Ascending aorta (tissue), 2 donors: ENCODE measurements at regions of chr3 and their contacts with region 1.

Region 1: DNA sequence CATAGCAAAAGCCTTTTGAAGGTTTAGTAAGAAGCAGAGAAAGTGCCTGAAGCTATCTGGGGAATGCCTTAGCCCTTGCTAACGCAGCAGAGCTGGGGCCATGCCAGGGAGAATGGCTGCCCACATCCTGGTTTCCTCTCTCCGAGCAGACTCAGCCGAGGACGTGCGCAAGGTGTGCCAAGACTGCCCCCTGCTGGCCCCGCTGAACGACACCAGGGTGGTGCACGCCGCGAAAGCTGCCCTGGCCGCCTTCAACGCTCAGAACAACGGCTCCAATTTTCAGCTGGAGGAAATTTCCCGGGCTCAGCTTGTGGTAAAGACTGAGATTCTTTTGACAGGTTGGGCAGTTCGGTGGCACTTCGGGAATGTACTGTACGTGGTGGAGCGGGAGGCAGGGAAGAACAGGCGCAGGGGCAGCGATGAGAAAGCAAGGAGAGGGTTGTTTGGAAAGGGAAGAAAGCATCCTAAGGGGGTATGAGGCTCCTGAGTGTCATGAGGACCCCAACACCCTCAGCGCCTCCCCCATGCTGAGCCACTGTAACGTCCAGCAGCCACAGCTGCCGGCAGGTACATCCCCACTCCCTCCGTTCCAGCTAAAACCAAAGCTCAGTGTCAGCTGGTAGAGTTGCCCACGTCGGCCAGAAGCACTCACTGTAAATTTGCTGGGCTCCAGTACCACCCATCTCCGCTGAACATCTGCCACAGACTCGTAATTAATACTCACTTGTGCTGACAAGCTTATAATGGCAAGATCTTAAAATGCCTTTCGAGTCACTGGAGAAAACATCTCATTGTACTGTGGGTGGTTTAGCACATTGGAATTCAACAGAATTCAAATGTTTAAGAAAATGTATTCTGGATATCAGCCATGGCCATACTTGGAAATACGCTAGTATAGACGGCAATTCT is 4.4 kb downstream of the AHSG start:
- DNase-seq: peak; percentile 66 to 93
- H3K4me3 ChIP-seq: peak overlapping the region in 1 of 2 donors; percentile 45
- H3K27ac ChIP-seq: no peak overlapping the region
- H3K4me1 ChIP-seq: peaks cover 2 to 4% of the 10 kb centered on the region in 2 donors
- H3K27me3 ChIP-seq: no peaks in the 10 kb centered on the region
- CTCF ChIP-seq: peak; percentile 86 to 93 (median 88)

Region 2: GRCh38 chr3:185976977-185977678 is 640.2 kb before region 1 on chr3:
- intact Hi-C with region 1: loop called (anchors 2 kb)
- DNase-seq: peak in 1 of 2 donors; percentile 88
- H3K4me3 ChIP-seq: no peak overlapping the region
- H3K27ac ChIP-seq: no peak overlapping the region
- H3K4me1 ChIP-seq: peaks cover 4 to 24% of the 10 kb centered on the region in 2 donors
- H3K27me3 ChIP-seq: no peaks in the 10 kb centered on the region
- CTCF ChIP-seq: peak; percentile 63 to 86 (median 83)

Region 3: GRCh38 chr3:186551387-186551786 is 65.9 kb before region 1 on chr3:
- intact Hi-C with region 1: no loop called
- DNase-seq: no peak
- H3K4me3 ChIP-seq: no peak overlapping the region
- H3K27ac ChIP-seq: no peak overlapping the region
- H3K4me1 ChIP-seq: no peaks in the 10 kb centered on the region
- H3K27me3 ChIP-seq: no peaks in the 10 kb centered on the region
- CTCF ChIP-seq: no peak

Region 4: GRCh38 chr3:186570096-186570940 is 47.0 kb before region 1 on chr3 and contains the start of gene DNAJB11:
- intact Hi-C with region 1: loop called (anchors 1 kb)
- DNase-seq: peak; percentile 97 to 100
- H3K4me3 ChIP-seq: peak within 1 kb of the TSS; percentile 98 to 99
- H3K27ac ChIP-seq: peak within 1 kb of the TSS; percentile 93 to 97
- H3K4me1 ChIP-seq: peaks cover 0 to 21% of the 10 kb centered on the region in 2 donors
- H3K27me3 ChIP-seq: no peaks in the 10 kb centered on the region
- CTCF ChIP-seq: no peak
- total RNA-seq, gene DNAJB11: 31.3 TPM

Region 5: GRCh38 chr3:186679151-186679550 is 61.9 kb after region 1 on chr3:
- intact Hi-C with region 1: no loop called
- DNase-seq: no peak
- H3K4me3 ChIP-seq: no peak overlapping the region
- H3K27ac ChIP-seq: no peak overlapping the region
- H3K4me1 ChIP-seq: no peaks in the 10 kb centered on the region
- H3K27me3 ChIP-seq: no peaks in the 10 kb centered on the region
- CTCF ChIP-seq: no peak

Region 6: DNA sequence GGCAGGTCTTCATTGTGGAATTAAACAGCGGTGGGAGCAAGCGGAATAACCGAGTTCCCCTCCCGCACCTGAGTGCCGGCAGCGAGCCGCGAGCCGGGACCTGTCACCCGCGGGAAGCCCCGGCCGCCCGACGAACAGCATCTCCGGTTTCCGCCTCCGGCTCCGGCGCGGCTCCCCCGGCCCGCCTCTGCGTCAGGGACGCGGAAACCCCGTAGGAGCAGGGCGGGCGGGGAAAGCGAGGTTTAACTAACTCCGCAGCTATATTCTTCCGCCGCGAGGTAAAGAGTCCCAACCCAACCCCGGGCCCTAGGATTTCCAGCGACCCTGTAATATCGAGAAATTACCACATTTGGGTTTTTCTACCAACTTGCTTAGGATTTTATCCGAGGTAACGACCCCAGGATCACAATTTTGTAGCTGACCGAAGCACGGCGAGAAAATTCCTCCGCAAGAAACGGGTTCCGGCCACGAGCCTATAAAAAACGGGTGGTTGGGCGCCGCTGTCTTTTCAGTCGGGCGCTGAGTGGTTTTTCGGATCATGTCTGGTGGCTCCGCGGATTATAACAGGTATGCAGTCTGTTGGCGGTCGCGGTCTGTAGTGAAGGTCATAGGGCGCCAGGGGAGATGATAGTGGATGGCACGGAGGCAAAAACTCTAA is 165.9 kb after region 1 on chr3 and contains the start of gene EIF4A2:
- intact Hi-C with region 1: loop called (anchors 2 kb)
- DNase-seq: peak; percentile 60 to 94
- H3K4me3 ChIP-seq: peak within 1 kb of the TSS; percentile 88 to 94
- H3K27ac ChIP-seq: peak within 1 kb of the TSS; percentile 98
- H3K4me1 ChIP-seq: peaks cover 10 to 30% of the 10 kb centered on the region in 2 donors
- H3K27me3 ChIP-seq: no peaks in the 10 kb centered on the region
- CTCF ChIP-seq: no peak
- total RNA-seq, gene EIF4A2: 260 TPM

Region 7: DNA sequence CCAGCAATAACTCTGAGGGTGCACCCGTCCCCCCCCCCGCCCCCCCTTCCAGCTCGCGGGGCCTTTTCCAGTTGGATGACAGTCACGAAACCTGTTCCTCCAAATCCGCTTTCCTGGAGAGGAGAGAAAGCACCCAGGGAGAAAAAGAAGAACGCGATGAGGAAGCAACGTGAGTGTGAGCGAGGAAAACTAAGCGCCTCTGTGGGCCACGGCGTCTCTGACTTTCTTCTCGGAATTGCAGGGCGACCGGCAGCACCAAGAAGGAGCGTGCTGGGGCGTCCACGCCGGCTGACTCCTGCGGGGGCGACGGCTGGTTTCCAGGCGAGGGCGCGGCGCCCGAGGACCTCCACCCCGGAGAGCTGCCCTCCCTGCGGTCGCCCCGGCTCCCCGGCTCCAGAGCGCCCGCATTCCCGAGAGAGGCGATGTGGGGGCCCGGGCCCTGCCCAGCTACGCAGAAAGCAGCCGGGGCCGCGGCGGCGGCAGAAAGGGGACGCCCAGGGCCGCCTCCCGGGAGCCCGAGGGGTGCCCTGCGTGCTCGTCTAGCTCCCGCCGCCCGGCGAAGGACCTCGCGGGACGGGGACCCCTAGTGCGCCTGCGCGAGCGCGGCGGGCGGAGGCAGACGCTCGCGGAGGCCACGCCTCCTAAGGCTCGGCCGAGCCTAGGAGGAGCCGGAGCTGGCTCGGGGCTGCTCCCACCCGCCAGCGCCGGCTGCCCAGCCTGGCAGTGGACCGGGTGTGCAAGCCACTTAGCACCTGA is 209.9 kb after region 1 on chr3:
- intact Hi-C with region 1: loop called (anchors 2 kb)
- DNase-seq: peak in 1 of 2 donors; percentile 88
- H3K4me3 ChIP-seq: peak overlapping the region; percentile 62 to 86
- H3K27ac ChIP-seq: peak overlapping the region; percentile 57 to 62
- H3K4me1 ChIP-seq: peaks cover 3 to 5% of the 10 kb centered on the region in 2 donors
- H3K27me3 ChIP-seq: peaks cover 7% of the 10 kb centered on the region
- CTCF ChIP-seq: no peak

Region 8: DNA sequence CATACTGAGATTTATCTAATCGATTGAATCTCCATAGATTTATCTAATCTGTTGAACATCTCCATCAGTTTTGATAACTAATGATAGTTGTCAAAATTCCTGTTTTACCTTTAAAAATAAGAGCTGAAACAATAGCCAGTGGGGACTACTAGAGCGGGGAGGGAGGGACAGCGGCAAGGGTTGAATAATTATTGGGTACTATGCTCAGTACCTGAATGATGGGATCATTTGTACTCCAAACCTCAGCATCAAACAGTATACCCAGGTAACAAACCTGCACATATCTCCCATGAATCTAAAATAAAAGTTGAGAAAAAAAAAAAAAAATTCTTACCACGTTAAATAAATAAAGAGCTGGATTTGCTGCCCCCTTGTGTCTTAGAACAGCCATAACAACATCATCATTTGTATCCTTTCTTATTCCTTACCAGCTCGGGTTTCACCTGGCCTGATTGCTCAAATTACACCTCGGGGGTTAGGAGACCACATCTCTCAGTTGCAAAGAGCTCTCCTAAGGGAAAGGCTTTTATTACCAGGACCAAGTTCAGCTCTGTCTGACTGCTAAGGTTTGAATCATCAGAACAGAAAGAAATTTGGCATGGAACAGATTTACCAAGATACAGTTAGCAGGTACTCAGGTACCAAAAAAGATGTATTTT is 547.7 kb after region 1 on chr3:
- intact Hi-C with region 1: loop called (anchors 5 kb)
- DNase-seq: no peak
- H3K4me3 ChIP-seq: no peak overlapping the region
- H3K27ac ChIP-seq: no peak overlapping the region
- H3K4me1 ChIP-seq: peaks cover 2 to 5% of the 10 kb centered on the region in 2 donors
- H3K27me3 ChIP-seq: no peaks in the 10 kb centered on the region
- CTCF ChIP-seq: peak; percentile 58 to 70 (median 68)

Region 9: DNA sequence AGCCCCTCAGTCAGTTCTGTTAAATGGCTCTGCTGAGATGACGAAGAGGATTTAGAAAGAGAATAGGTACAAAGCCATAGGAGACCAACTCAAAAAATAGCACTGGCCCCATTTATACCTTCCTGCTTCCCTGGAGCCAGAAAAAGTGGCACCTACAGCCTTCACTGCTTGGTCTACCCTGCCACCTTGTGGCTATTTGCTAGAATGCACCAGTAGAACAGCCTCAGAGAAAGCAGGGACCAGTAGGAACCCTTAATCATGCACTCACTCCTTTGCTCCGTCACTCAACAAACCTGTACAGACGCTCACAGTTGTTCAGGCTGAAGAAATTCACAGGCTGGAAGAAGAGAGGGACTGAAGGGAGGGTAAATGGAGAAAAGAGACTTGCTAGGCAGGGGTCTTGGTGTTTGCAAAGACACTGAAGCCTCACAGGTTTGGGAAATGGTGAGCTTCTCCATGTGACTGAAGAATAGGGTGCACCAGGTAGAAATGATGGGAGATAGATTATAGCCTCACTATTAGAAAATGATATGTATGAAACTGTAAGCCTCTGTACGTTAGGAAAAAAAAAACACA is 1097.2 kb after region 1 on chr3:
- intact Hi-C with region 1: loop called (anchors 5 kb)
- DNase-seq: peak in 1 of 2 donors; percentile 88
- H3K4me3 ChIP-seq: no peak overlapping the region
- H3K27ac ChIP-seq: no peak overlapping the region
- H3K4me1 ChIP-seq: no peaks in the 10 kb centered on the region
- H3K27me3 ChIP-seq: no peaks in the 10 kb centered on the region
- CTCF ChIP-seq: peak; percentile 89 to 94 (median 94)